A549 (cell line): ENCODE measurements at regions of chr1 and their contacts with region 1.

Region 1: DNA sequence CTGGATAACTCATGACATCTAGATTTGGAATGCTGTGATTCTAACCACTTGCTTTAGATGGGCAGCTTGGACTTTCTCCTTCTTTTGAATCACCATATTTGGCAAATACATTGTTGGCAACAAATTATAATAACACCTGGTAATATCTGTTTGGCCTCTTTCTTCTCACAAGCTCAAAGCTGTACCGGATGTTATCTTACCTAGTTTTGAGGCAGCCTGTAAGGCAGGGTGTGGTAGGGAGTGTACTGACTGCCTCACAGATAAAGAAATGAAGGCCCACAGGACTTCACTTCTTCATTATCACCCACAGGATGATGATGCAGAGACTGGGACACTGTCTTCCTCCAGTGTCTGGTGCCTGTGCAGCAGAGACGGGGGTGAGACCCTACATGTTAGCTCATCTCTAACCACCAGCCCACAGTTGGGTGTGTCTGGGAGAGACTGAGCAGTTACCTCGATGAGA is 28.5 kb downstream of the TUFT1 start:
- DNase-seq: no peak
- ATAC-seq: peak; percentile 33 to 34; a peak in 3 of 6 replicates
- H3K4me3 ChIP-seq: no peak overlapping the region
- H3K27ac ChIP-seq: peak overlapping the region in 1 of 2 experiments; percentile 57; a peak in 3 of 6 replicates
- H3K4me1 ChIP-seq: peaks cover 50% of the 10 kb centered on the region
- CTCF ChIP-seq: no peak
- EP300 ChIP-seq: no peak
- POLR2A ChIP-seq: no peak
- RAD21 ChIP-seq: no peak

Region 2: GRCh38 chr1:151547119-151547899 is 21.3 kb before region 1 on chr1:
- CTCF ChIA-PET with region 1: interaction called, 13 read pairs
- POLR2A ChIA-PET with region 1: interaction called, 5 read pairs
- DNase-seq: peak; percentile 88 to 95
- ATAC-seq: peak; percentile 82 to 86
- H3K4me3 ChIP-seq: peak overlapping the region; percentile 0; the same call in 1 of the 3 replicates
- H3K27ac ChIP-seq: peak overlapping the region; percentile 85 to 91
- H3K4me1 ChIP-seq: peaks cover 83% of the 10 kb centered on the region
- CTCF ChIP-seq: no peak
- EP300 ChIP-seq: peak; percentile 63 to 84; a peak in 4 of 5 replicates
- POLR2A ChIP-seq: no peak
- RAD21 ChIP-seq: 0 out of 5 replicates have a peak, but pooled peaks of 1 of the 2 experiments have one; percentile 26

Region 3: DNA sequence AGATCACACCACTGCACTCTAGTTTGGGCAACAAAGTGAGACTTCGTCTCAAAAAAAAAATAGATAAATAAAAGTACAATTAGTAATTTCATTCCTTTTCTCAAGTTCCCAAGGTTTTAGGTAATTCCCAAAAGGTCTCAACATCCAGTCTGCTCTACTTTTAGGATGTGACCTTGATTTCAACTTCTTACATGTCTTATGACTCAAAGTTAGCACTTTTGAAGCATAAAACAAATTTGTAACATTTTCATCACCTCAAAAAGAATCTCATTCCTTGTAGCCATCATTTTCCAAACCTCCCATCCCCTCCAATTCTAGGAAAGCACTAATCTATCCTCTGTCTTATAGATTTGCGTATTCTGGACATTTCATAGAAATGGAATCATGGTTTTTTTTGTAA is 75.3 kb after region 1 on chr1:
- CTCF ChIA-PET with region 1: no interaction called
- POLR2A ChIA-PET with region 1: no interaction called
- DNase-seq: no peak
- ATAC-seq: no peak
- H3K4me3 ChIP-seq: no peak overlapping the region
- H3K27ac ChIP-seq: no peak overlapping the region
- H3K4me1 ChIP-seq: peaks cover 23% of the 10 kb centered on the region
- CTCF ChIP-seq: no peak
- EP300 ChIP-seq: no peak
- POLR2A ChIP-seq: no peak
- RAD21 ChIP-seq: no peak

Region 4: DNA sequence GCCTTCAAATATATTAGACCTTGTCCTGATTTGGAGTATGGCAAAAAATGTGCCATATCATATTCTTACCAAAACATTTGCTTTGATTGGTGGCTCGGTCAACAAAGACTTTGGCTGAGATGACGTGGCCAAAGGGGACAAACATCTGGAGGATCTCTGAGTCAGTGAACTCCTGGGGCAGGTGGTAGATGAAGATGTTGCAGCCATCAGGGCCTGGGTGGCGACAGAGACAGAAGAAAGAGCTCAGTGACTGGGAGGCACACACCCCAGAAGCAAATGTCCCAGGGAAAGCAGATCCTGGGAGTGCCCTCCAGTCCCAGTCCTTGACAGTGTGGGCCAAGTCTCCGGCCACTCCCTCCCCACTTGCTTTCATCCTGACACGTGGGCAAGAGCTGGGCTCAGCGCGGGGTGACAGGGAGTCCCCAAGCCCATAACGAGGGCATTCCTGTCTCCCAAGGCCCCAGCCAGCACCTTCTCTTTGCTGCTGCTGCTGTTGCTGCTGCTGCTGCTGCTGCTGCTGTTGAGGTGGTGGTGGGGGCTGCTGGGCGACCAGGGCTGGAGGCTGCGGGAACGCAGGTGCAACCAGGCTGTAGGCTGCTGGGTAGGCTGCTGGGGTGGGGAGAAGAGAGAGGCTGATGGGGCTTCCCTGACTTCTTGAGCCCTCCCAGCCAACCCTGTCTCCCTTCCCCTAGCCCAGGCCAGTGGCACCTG is 137.3 kb after region 1 on chr1:
- CTCF ChIA-PET with region 1: no interaction called
- POLR2A ChIA-PET with region 1: no interaction called
- DNase-seq: no peak
- ATAC-seq: peak in 1 of 2 experiments; percentile 22; a peak in 3 of 6 replicates
- H3K4me3 ChIP-seq: no peak overlapping the region
- H3K27ac ChIP-seq: no peak overlapping the region
- H3K4me1 ChIP-seq: peaks cover 3% of the 10 kb centered on the region; the same call in 1 of the 3 replicates
- CTCF ChIP-seq: no peak
- EP300 ChIP-seq: no peak
- POLR2A ChIP-seq: no peak
- RAD21 ChIP-seq: no peak